Calu3 (cell line): ENCODE measurements at regions of chr14 and their contacts with region 1.

Region 1: GRCh38 chr14:50109342-50109741 is 7.0 kb downstream of the VCPKMT start:
- DNase-seq: no peak
- H3K4me3 Mint-ChIP-seq: no peak overlapping the region
- H3K27ac Mint-ChIP-seq: no peak overlapping the region
- H3K4me1 Mint-ChIP-seq: no peaks in the 10 kb centered on the region
- H3K27me3 Mint-ChIP-seq: no peaks in the 10 kb centered on the region
- CTCF ChIP-seq: no peak

Region 2: DNA sequence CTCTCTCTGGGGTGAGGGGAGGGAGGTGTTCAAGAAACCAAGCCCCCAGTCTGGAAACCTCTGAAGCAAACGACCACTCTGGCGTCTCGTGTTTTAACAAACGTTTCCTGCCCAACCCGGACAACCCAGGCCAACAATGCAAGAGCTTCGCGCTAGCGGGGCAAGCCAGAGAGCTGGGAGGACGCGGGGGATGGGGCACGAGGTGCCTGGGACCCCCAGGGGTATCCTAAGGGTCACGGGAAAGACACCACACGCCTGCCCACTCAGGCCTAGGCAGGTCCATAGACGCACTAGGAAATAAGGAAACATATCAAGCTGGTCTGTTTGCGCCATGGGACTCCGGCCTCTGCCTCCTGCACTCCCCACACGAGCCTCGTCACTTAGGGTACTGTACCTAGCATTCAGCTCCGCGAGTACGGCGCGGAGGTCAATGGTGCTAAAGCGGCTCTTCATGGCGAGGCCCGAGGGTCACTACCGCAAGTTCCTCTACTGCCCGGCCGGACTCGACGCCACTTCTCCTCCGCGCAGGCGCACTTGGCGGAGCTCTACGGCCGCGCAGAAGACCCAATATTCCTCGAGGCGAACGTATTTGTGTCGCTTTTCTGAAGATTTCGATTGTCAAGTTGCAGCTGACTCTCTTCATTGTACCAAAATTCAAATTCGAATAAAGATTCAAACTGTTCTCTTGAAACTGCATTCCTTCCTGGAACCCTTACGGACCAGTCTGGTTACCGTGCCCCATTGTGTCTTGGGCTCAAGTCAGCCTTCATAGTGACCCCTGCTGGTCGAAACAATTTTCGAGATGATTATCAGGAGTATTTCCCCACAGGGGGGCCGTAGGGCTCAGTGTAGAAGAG is 256.8 kb before region 1 on chr14 and contains the start of gene NEMF:
- CTCF ChIA-PET with region 1: interaction called, 7 read pairs
- intact Hi-C with region 1: loop called (anchors 2 kb)
- DNase-seq: peak; percentile 86
- H3K4me3 Mint-ChIP-seq: peak within 1 kb of the TSS; percentile 96
- H3K27ac Mint-ChIP-seq: peak within 1 kb of the TSS; percentile 97
- H3K4me1 Mint-ChIP-seq: peaks cover 25% of the 10 kb centered on the region
- H3K27me3 Mint-ChIP-seq: no peaks in the 10 kb centered on the region
- CTCF ChIP-seq: peak; percentile 84
- total RNA-seq, gene NEMF: 76.3 and 77.7 TPM in 2 replicates

Region 3: GRCh38 chr14:49867831-49868723 is 241.3 kb before region 1 on chr14:
- CTCF ChIA-PET with region 1: interaction called, 6 read pairs
- intact Hi-C with region 1: loop called (anchors 1 kb)
- DNase-seq: peak; percentile 96
- H3K4me3 Mint-ChIP-seq: peak overlapping the region; percentile 82
- H3K27ac Mint-ChIP-seq: peak overlapping the region; percentile 76
- H3K4me1 Mint-ChIP-seq: peaks cover 8% of the 10 kb centered on the region
- H3K27me3 Mint-ChIP-seq: no peaks in the 10 kb centered on the region
- CTCF ChIP-seq: no peak

Region 4: DNA sequence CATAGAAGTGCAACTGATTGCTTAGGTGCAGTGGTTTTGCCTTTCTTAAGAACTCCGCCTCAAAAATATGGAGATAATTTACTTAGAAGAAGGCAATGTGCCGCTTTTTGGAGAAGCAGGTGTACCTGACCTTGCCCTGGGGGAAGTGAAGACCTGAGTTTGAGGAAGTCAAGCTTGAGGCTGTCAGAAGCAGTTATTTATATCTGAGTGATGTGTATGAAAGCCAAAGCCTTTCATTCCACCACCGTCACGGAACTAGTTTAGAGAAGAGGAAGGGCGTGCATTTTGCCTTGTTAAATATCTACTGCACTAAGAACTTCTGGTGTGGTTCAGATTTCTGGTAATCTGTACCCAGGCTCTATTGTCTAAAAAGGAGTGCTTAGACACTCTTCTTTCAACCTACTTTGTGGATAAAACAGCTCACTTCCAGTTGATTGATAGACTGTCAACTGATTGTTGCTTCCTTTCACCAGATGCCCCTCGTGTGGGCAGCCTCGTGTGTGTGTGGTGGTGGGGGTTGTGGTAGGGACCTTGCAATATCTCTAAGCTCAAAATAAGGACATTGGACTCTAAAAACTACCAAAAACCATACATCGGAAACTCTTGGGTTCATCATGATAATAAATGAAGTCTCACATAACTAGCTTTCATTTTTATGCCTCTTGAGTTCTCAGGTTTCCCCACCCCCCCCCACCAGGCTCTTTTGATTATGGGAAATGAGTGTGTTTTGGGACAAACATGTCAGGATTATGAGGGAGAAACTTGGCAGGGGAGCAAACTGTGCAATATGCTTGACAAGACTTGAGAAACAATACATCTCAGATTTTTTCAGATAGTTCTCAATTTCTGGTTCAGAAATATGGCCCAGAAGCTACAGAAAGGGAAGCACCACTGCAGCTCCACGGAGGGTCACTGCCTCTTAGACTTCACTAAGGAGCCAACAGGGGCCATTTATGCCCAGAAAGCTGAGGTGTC is 137.9 kb before region 1 on chr14:
- CTCF ChIA-PET with region 1: no interaction called
- intact Hi-C with region 1: loop called (anchors 2 kb)
- DNase-seq: no peak
- H3K4me3 Mint-ChIP-seq: peak overlapping the region; percentile 7
- H3K27ac Mint-ChIP-seq: peak overlapping the region; percentile 85
- H3K4me1 Mint-ChIP-seq: peaks cover 78% of the 10 kb centered on the region
- H3K27me3 Mint-ChIP-seq: no peaks in the 10 kb centered on the region
- CTCF ChIP-seq: no peak

Region 5: DNA sequence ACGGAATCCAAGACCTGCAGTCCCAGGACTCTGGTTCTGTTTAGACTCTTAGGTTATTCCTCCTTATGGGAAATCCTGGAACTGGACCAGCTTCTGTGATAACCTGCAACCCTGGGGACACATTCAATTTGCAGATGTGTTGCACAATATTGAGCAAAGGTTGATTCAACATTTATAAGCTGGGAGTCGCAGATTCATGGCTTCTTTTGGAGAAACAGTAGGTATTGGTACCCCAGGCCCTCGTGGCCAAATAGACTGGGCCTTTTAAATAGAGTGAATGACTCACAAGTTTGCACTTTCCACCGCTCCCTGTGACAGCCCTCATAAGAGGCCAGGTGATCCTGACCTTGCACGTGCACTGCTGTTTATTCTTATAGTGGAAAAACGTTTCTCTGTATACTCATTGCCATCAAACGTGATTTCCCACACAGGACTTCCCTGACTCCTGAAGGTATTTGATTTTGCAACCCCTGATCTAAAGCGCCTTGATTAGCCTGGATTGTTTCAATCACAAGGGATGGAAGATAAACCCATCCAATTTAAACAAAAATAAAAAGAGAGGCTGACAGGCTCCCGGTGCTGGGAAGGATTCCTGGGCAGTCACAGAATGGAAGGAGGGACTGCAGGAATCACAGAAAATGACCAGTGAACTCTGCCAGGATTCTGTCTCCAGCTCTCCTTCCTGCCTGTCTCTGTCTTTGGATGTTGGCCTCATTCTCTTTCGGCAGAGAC is 91.0 kb before region 1 on chr14:
- CTCF ChIA-PET with region 1: no interaction called
- intact Hi-C with region 1: loop called (anchors 10 kb)
- DNase-seq: peak; percentile 65
- H3K4me3 Mint-ChIP-seq: no peak overlapping the region
- H3K27ac Mint-ChIP-seq: peak overlapping the region; percentile 78
- H3K4me1 Mint-ChIP-seq: peaks cover 55% of the 10 kb centered on the region
- H3K27me3 Mint-ChIP-seq: no peaks in the 10 kb centered on the region
- CTCF ChIP-seq: no peak